IMR-90 (cell line): ENCODE measurements at regions of chr10 and their contacts with region 1.

Region 1: GRCh38 chr10:102167861-102168260 is 15.7 kb downstream of the NOLC1 start:
- DNase-seq: no peak
- ATAC-seq: no peak
- H3K4me3 ChIP-seq: no peak overlapping the region
- H3K27ac ChIP-seq: no peak overlapping the region
- H3K4me1 ChIP-seq: no peaks in the 10 kb centered on the region
- H3K27me3 ChIP-seq: no peaks in the 10 kb centered on the region; the same call in 1 of the 2 replicates
- CTCF ChIP-seq: no peak
- POLR2A ChIP-seq: no peak
- RAD21 ChIP-seq: no peak

Region 2: DNA sequence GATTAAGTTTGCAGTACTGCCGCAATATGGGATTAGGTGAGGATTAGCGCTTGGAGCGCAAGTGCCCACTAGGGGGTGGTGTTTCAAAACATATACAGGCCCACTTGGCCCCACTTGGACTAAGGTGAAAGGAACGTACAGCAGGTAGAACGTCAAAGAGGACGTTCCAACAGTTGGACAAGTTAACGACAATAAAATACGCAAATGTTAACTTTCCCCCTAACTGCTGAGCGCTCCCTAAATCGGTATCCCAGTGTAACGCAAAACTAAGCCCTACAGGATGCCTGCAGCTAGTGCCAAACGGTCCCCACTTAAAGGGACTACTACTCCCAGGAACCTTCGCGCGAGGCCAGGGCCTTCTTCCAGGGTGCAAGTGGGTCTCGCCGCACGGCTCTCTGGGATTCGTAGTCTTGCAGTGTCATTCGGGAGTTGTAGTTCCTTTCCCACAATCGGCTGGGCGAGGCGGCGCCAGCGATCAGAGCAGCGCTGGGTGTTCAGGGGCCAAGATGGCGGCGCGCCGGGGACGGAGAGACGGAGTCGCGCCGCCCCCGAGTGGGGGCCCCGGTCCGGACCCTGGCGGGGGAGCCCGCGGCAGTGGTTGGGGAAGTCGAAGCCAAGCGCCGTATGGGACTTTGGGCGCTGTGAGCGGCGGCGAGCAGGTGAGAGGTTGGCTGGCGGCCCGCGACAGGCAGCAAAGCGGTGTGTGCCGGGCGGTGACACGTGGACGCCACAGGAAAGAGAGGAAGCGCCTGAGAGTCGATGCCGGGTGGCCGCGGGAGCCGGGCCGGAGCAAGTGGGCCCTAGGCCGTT is 35.1 kb before region 1 on chr10 and contains the start of gene PPRC1:
- CTCF ChIA-PET with region 1: no interaction called
- POLR2A ChIA-PET with region 1: no interaction called
- dilution Hi-C with region 1: no loop called
- in situ Hi-C with region 1: no loop called
- intact Hi-C with region 1: loop called (anchors 1 kb)
- DNase-seq: peak; percentile 99
- ATAC-seq: peak; percentile 90
- H3K4me3 ChIP-seq: peak within 1 kb of the TSS; percentile 61
- H3K27ac ChIP-seq: peak within 1 kb of the TSS; percentile 96
- H3K4me1 ChIP-seq: peaks cover 10% of the 10 kb centered on the region
- H3K27me3 ChIP-seq: no peaks in the 10 kb centered on the region
- CTCF ChIP-seq: peak; percentile 80
- POLR2A ChIP-seq: peak; percentile 95
- RAD21 ChIP-seq: peak; percentile 55
- total RNA-seq, gene PPRC1: 11.4 and 11.8 TPM in 2 replicates

Region 3: DNA sequence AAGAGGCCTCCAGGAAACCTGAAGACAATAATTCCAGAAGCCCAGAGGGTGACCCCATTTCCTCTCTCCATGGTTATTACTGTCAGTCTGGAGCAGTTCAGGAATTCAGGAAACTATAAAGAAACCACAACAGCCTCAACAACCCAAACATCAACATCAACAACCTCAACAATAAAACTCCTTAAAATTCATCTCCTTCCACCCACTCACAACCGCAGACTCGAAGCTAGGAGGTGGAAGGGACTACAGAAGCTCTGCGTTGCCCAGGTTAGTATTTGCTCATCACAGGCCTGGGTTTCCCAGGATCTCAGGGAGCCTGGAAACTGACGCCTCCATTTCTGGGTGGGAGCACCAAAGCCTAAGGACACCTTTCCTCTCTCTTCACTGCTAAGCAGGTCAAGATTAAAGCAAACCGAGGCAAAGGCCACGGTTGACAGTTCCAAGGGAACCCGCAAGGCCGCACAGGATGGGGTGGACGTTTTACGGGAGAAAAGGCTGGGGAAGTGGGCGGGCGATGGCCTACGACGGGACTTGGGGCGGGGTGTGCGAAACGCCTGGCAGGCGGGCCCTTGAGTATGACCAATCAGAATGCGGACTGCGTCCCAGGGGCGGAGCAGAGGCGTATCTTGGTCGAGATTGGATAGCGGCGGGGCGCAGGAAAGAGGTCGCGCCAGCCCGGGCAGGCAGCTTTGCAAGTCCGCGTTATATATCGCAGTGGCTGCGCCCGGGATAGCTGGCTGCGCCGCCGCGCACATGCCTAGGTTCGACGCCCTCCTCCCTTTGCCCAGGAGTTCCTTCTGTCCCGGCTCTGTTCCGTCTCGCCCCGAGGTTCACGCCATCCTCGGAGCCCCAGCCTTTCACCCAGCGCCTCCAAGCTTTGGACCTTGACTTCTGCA is 58.0 kb after region 1 on chr10 and contains the start of gene ELOVL3:
- CTCF ChIA-PET with region 1: interaction called, 10 read pairs
- POLR2A ChIA-PET with region 1: no interaction called
- dilution Hi-C with region 1: no loop called
- in situ Hi-C with region 1: loop called (anchors 5 kb)
- intact Hi-C with region 1: loop called (anchors 2 kb)
- DNase-seq: peak; percentile 91
- ATAC-seq: peak; percentile 96
- H3K4me3 ChIP-seq: peak within 1 kb of the TSS; percentile 33
- H3K27ac ChIP-seq: peak within 1 kb of the TSS; percentile 35
- H3K4me1 ChIP-seq: peaks cover 11% of the 10 kb centered on the region
- H3K27me3 ChIP-seq: peaks cover 22% of the 10 kb centered on the region
- CTCF ChIP-seq: no peak
- POLR2A ChIP-seq: no peak
- RAD21 ChIP-seq: no peak
- total RNA-seq, gene ELOVL3: 0.28 and 0.36 TPM in 2 replicates

Region 4: GRCh38 chr10:102335184-102335583 is 167.3 kb after region 1 on chr10:
- CTCF ChIA-PET with region 1: no interaction called
- POLR2A ChIA-PET with region 1: no interaction called
- dilution Hi-C with region 1: no loop called
- in situ Hi-C with region 1: no loop called
- intact Hi-C with region 1: no loop called
- DNase-seq: peak; percentile 15
- ATAC-seq: no peak
- H3K4me3 ChIP-seq: no peak overlapping the region
- H3K27ac ChIP-seq: no peak overlapping the region
- H3K4me1 ChIP-seq: peaks cover 6% of the 10 kb centered on the region
- H3K27me3 ChIP-seq: no peaks in the 10 kb centered on the region
- CTCF ChIP-seq: no peak
- POLR2A ChIP-seq: no peak
- RAD21 ChIP-seq: no peak

Region 5: GRCh38 chr10:102352066-102352715 is 184.3 kb after region 1 on chr10:
- CTCF ChIA-PET with region 1: interaction called, 3 read pairs
- POLR2A ChIA-PET with region 1: no interaction called
- dilution Hi-C with region 1: no loop called
- in situ Hi-C with region 1: loop called (anchors 5 kb)
- intact Hi-C with region 1: loop called (anchors 1 kb)
- DNase-seq: peak; percentile 54
- ATAC-seq: peak; percentile 92
- H3K4me3 ChIP-seq: no peak overlapping the region
- H3K27ac ChIP-seq: no peak overlapping the region
- H3K4me1 ChIP-seq: no peaks in the 10 kb centered on the region
- H3K27me3 ChIP-seq: no peaks in the 10 kb centered on the region
- CTCF ChIP-seq: peak; percentile 82
- POLR2A ChIP-seq: no peak
- RAD21 ChIP-seq: peak; percentile 81

Region 6: GRCh38 chr10:102399217-102400089 is 231.6 kb after region 1 on chr10:
- CTCF ChIA-PET with region 1: no interaction called
- POLR2A ChIA-PET with region 1: no interaction called
- dilution Hi-C with region 1: no loop called
- in situ Hi-C with region 1: no loop called
- intact Hi-C with region 1: loop called (anchors 1 kb)
- DNase-seq: peak; percentile 82
- ATAC-seq: peak; percentile 76
- H3K4me3 ChIP-seq: peak overlapping the region; percentile 39
- H3K27ac ChIP-seq: peak overlapping the region; percentile 46
- H3K4me1 ChIP-seq: peaks cover 17% of the 10 kb centered on the region
- H3K27me3 ChIP-seq: no peaks in the 10 kb centered on the region
- CTCF ChIP-seq: peak; percentile 95
- POLR2A ChIP-seq: no peak
- RAD21 ChIP-seq: peak; percentile 68

Region 7: GRCh38 chr10:102420810-102421644 is 253.2 kb after region 1 on chr10 and contains the start of gene FBXL15:
- CTCF ChIA-PET with region 1: no interaction called
- POLR2A ChIA-PET with region 1: no interaction called
- dilution Hi-C with region 1: no loop called
- in situ Hi-C with region 1: no loop called
- intact Hi-C with region 1: loop called (anchors 1 kb)
- DNase-seq: peak; percentile 95
- ATAC-seq: peak; percentile 91
- H3K4me3 ChIP-seq: peak within 1 kb of the TSS; percentile 55
- H3K27ac ChIP-seq: peak within 1 kb of the TSS; percentile 77
- H3K4me1 ChIP-seq: peaks cover 9% of the 10 kb centered on the region
- H3K27me3 ChIP-seq: peaks cover 13% of the 10 kb centered on the region; the same call in 1 of the 2 replicates
- CTCF ChIP-seq: no peak
- POLR2A ChIP-seq: 0 out of 2 replicates have a peak, but pooled peaks have one; percentile 23
- RAD21 ChIP-seq: no peak
- total RNA-seq, gene FBXL15: 2.5 and 3.0 TPM in 2 replicates

Region 8: DNA sequence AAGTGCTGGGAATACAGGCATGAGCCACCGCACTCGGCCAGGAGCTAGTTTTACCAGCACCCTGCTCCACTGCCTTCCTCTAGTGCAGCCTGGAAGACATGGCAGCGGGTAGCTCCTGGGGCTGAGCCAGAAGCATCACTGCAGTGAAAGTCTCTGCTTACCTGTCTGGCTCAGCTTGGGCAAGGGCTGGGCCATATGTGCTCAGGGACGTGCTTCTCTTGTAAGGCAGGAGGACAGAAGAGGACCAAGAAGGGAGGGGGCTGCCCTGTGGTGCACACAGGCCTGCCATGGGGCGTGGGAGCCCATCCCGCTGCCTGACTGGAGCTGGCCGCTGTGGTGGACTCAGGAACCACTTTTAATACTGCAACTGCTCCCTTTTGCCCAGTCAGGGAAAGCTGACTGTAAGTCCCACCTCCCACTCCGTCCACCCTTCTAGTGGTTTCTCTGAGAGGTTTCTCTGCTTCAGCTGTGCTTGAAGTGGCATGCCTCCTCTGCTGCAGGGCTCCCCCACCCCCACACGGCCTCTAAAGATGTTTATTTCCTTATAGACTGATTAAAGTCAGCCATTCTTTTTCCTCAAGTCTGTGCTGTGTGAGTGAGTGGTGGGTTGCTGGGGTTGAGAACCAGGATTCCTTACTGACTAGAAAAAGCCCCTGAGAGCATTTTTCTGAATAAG is 308.7 kb after region 1 on chr10:
- CTCF ChIA-PET with region 1: no interaction called
- POLR2A ChIA-PET with region 1: no interaction called
- dilution Hi-C with region 1: no loop called
- in situ Hi-C with region 1: no loop called
- intact Hi-C with region 1: loop called (anchors 2 kb)
- DNase-seq: no peak
- ATAC-seq: no peak; the same call in 1 of the 2 replicates
- H3K4me3 ChIP-seq: no peak overlapping the region
- H3K27ac ChIP-seq: no peak overlapping the region
- H3K4me1 ChIP-seq: no peaks in the 10 kb centered on the region
- H3K27me3 ChIP-seq: no peaks in the 10 kb centered on the region
- CTCF ChIP-seq: no peak
- POLR2A ChIP-seq: no peak
- RAD21 ChIP-seq: no peak